Activated CD4-positive, alpha-beta T cell treated with anti-CD3 and anti-CD28 coated beads, Interleukin-2, amount 10 ng/mL, durations not matched to agents 24 days and 14 days (primary cell): ENCODE measurements at regions of chr1 and their contacts with region 1.

Region 1: DNA sequence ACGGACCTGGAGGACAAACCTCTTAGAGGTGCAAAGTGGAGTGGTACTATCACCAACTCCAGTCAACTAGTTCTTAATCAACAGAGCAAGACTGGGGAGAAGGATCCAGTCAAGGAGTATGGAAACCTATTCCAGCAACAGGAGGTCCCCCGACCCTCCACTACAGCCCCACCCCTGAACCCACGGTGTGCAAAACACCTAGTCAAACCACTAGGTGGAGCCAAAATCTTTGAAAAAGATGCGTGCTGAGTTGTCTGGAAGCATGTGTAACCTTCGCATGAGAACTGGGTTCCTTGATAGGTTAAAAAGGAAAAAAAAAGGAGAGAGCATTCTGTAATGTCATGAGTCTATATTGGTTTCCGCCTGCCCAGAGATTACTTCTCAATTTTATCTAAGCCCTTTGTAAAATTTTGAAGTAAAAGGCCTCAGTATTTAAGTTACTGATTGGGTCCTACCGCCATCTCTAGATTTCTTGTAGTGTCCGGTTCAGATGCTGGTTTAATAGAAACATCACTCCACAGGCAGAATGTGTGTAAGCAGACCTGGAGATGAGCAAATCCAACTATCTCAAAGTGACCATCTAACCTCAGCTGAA is 81.9 kb upstream of the HAO2 start:
- DNase-seq: peak; percentile 77
- H3K4me3 Mint-ChIP-seq: no peak overlapping the region
- H3K27ac Mint-ChIP-seq: no peak overlapping the region
- H3K4me1 Mint-ChIP-seq: no peaks in the 10 kb centered on the region
- H3K27me3 Mint-ChIP-seq: peaks cover 19% of the 10 kb centered on the region

Region 2: GRCh38 chr1:118928739-118929554 is 357.7 kb before region 1 on chr1:
- intact Hi-C with region 1: no loop called
- DNase-seq: peak; percentile 61
- H3K4me3 Mint-ChIP-seq: no peak overlapping the region
- H3K27ac Mint-ChIP-seq: no peak overlapping the region
- H3K4me1 Mint-ChIP-seq: no peaks in the 10 kb centered on the region
- H3K27me3 Mint-ChIP-seq: no peaks in the 10 kb centered on the region

Region 3: DNA sequence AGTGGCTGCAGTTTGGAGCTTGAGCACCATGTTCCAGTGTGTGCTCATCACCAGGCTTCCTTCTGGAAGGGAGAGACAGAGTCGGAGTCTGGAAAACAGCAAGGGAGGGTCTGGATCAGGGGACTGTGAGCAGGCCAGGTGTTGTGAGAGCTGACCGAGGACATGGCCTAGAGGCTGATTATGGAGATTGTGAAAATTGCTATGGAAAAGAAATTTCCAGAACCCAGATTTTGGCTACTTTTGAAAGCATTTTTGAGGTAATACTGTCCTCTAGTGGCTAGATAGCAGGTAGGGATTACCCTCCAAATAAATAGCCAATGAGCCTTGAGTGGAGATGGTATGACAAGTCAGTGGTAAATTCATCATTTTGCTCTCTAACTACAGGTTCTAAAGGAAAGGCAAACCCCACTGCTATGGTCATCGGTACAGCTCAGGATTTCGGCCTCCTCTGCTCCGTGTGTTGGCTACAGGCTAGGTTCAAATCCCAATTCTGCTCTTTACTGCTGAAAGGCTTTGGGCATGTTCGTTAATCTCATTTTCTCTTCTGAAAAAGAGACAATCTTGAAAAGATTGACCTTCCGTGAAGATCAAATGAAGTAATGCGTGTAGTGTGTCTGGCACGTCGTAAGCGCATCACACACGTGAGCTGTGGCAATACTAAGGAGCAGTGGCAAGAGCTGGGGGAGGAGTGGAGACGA is 80.9 kb after region 1 on chr1:
- intact Hi-C with region 1: loop called (anchors 5 kb)
- DNase-seq: no peak
- H3K4me3 Mint-ChIP-seq: no peak overlapping the region
- H3K27ac Mint-ChIP-seq: no peak overlapping the region
- H3K4me1 Mint-ChIP-seq: no peaks in the 10 kb centered on the region
- H3K27me3 Mint-ChIP-seq: peaks cover 10% of the 10 kb centered on the region